Sigmoid colon (tissue), 7 donors: ENCODE measurements at regions of chr6 and their contacts with region 1.

Region 1: GRCh38 chr6:57316581-57317059 is 810 bp upstream of the PRIM2 start:
- DNase-seq: peak; percentile 91
- H3K4me3 ChIP-seq: peak overlapping the region; percentile 38 to 60 (median 55)
- H3K27ac ChIP-seq: peak overlapping the region; percentile 72 to 89 (median 87)
- H3K4me1 ChIP-seq: peaks cover 0 to 56% (median 40%) of the 10 kb centered on the region in 4 donors
- H3K27me3 ChIP-seq: no peaks in the 10 kb centered on the region
- CTCF ChIP-seq: peak; percentile 68 to 87 (median 76)
- EP300 ChIP-seq: no peak
- POLR2A ChIP-seq: peak in 1 of 2 donors; percentile 13

Region 2: DNA sequence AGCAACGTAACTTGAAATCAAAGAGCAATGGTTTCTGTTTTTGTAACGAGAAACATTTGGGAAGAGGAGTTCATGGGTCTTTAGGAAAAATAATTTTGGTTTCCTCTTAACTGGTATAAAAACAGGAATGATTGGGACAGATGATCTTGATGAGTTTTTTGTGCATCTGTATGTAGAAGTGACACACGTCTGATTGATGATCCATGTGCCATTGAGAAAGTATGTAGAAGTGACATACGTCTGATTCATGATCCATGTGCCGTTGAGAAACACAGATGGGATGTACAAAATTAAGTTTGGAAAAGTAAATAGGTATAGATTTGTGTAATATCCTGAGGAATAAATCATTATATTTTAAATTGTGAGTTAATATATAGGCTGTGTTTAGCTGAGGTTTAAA is 268.0 kb before region 1 on chr6:
- intact Hi-C with region 1: loop called (anchors 1 kb)
- DNase-seq: no peak
- H3K4me3 ChIP-seq: peak overlapping the region in 1 of 4 donors; percentile 13
- H3K27ac ChIP-seq: peak overlapping the region in 2 of 4 donors; percentile 64 to 72
- H3K4me1 ChIP-seq: peaks cover 0 to 27% (median 18%) of the 10 kb centered on the region in 4 donors
- H3K27me3 ChIP-seq: no peaks in the 10 kb centered on the region
- CTCF ChIP-seq: no peak
- EP300 ChIP-seq: no peak
- POLR2A ChIP-seq: no peak

Region 3: DNA sequence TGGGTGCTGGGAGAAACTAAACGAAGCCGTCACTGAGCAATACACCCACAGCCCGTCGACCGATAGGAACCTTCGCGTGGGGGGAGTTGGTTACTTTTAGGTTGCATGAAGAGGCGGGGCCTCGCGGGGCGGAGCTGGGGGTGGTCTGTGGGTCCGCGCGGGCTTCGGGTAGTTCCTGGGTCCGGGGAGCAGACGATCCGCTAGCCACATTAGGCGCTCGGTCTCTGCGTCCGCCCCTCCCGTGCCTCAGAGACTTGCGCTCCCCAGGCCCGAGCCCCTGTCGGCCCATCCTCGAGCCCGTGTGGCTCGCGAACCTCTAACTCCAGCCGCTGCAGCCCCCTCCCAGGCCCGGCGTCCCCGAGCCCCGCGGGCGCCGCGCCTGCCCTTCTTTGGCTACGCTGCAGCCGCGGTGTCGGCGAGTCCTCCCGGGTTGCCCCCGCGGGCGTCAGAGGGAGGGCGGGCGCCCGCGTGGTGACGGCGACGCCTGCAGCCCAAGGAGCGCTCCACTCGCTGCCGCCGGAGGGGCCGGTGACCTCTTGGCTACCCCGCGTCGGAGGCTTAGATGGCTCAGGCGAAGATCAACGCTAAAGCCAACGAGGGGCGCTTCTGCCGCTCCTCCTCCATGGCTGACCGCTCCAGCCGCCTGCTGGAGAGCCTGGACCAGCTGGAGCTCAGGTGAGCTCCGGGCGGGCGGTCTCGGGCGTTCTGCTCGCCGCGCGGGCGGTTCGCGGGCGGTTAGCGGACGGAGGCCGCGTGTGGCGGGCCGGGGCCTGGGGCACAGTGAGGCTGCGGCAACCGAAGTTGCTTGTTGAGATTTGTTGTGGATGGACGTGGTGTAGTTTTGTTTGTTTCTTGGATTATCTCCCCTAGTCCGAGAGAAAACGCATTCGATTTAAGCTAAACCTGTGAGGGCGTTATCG is 144.2 kb before region 1 on chr6 and contains the start of gene BAG2:
- intact Hi-C with region 1: loop called (anchors 1 kb)
- DNase-seq: peak; percentile 97
- H3K4me3 ChIP-seq: peak within 1 kb of the TSS; percentile 65 to 88 (median 74)
- H3K27ac ChIP-seq: peak within 1 kb of the TSS; percentile 89 to 99 (median 92)
- H3K4me1 ChIP-seq: peaks cover 0 to 35% (median 29%) of the 10 kb centered on the region in 4 donors
- H3K27me3 ChIP-seq: no peaks in the 10 kb centered on the region
- CTCF ChIP-seq: peak in 3 of 4 experiments; percentile 15 to 49 (median 26)
- EP300 ChIP-seq: no peak
- POLR2A ChIP-seq: peak; percentile 63 to 75
- total RNA-seq, gene BAG2: 55.6 to 74.5 (median 60.0) TPM

Region 4: DNA sequence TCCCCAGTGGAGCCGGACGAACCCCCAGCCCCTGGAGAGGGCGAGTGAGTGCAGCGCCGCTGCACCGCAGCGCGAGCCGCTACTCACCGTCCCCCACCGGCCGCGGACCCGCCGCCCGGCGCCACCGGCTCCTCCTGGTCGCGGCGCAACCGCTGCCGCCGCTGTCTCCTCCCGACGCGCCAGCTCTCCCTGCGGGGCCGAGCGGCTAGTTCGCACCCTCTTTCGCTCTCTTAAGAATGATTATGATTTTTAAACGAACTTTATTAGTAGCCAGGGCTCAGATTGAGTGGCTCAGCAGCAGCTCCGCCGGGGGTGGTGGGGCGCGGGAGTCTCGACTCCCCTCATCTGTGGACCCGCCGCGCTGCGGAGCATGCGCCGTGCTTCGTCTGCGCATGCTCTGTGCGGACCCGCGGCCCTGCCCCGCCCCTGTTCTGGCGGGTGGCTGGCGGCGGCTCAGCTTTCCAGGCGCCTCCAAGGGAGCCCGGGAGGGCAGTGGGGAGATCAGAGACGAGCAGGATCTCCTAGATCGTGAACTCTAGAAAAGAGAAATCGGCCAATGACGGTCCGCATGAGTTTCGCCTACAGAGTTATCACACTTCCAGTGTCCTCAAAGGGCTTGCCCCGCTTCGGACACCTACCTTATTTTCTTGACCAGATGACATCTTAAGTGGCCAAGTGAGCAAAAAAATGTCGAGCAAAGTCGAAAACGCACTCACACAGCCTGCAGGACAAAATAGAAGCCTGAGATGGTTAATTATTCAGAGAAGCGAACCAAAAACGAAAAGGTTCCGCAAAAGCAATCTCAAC is 94.5 kb before region 1 on chr6 and contains the start of gene RAB23:
- intact Hi-C with region 1: loop called (anchors 2 kb)
- DNase-seq: peak; percentile 94
- H3K4me3 ChIP-seq: peak within 1 kb of the TSS; percentile 87 to 97 (median 90)
- H3K27ac ChIP-seq: peak within 1 kb of the TSS; percentile 94 to 100 (median 96)
- H3K4me1 ChIP-seq: peaks cover 0 to 74% (median 31%) of the 10 kb centered on the region in 4 donors
- H3K27me3 ChIP-seq: no peaks in the 10 kb centered on the region
- CTCF ChIP-seq: no peak
- EP300 ChIP-seq: no peak
- POLR2A ChIP-seq: peak; percentile 92 to 98
- total RNA-seq, gene RAB23: 115 to 188 (median 167) TPM

Region 5: DNA sequence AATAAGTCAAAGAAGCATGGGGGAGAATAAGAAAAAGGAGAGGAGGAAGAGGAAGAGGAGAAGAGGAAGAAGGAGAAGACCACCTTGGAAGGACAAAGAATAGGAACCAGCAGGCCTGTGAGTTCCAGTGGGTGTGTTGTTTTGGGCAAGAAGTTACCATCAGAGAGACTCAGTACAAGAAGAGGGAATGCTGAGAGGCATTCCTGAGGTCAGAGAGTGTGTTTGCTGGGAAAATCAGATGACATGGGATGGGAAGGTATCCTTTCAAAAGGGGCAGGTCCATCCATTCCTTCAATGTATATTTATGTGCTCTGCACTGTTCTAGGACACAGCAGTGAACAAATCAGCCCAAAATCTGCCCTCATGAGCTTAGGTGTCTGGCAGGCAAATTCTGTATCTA is 39.7 kb before region 1 on chr6:
- intact Hi-C with region 1: no loop called
- DNase-seq: no peak
- H3K4me3 ChIP-seq: no peak overlapping the region
- H3K27ac ChIP-seq: no peak overlapping the region
- H3K4me1 ChIP-seq: peaks cover 0 to 20% (median 13%) of the 10 kb centered on the region in 4 donors
- H3K27me3 ChIP-seq: no peaks in the 10 kb centered on the region
- CTCF ChIP-seq: no peak
- EP300 ChIP-seq: no peak
- POLR2A ChIP-seq: no peak

Region 6: DNA sequence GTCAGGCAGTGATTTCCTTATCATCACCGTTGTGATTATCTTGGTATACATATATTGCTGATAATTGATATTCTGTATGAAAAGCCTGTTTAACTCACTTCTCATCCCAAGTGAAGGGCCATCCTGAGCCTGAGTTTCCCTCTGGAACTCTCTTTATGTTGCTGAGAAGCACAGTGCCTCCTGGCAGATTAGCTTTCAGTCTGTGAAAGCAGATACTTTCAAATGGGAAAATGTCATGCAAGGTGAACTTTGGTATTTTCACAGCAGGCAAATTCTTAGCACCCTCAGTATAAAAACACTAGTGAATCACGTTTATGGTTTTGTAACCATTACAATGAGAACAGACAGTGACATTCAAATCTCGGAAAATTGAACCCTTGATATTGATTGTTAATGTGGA is 152.5 kb after region 1 on chr6:
- intact Hi-C with region 1: no loop called
- DNase-seq: no peak
- H3K4me3 ChIP-seq: no peak overlapping the region
- H3K27ac ChIP-seq: no peak overlapping the region
- H3K4me1 ChIP-seq: peaks cover 0 to 26% (median 11%) of the 10 kb centered on the region in 4 donors
- H3K27me3 ChIP-seq: no peaks in the 10 kb centered on the region
- CTCF ChIP-seq: no peak
- EP300 ChIP-seq: no peak
- POLR2A ChIP-seq: no peak